Naive thymus-derived CD8-positive, alpha-beta T cell (primary cell): ENCODE measurements at regions of chr1 and their contacts with region 1.

Region 1: GRCh38 chr1:150979092-150980056 is 2.7 kb upstream of the ANXA9 start:
- DNase-seq: peak; percentile 77 to 94 (median 88)
- ATAC-seq: peak; percentile 58 to 60
- H3K4me3 Mint-ChIP-seq: peak overlapping the region; percentile 52 to 78 (median 68)
- H3K27ac Mint-ChIP-seq: peak overlapping the region; percentile 47 to 95 (median 80)
- H3K4me1 Mint-ChIP-seq: peaks cover 17 to 44% (median 39%) of the 10 kb centered on the region in 4 donors
- H3K27me3 Mint-ChIP-seq: no peaks in the 10 kb centered on the region

Region 2: DNA sequence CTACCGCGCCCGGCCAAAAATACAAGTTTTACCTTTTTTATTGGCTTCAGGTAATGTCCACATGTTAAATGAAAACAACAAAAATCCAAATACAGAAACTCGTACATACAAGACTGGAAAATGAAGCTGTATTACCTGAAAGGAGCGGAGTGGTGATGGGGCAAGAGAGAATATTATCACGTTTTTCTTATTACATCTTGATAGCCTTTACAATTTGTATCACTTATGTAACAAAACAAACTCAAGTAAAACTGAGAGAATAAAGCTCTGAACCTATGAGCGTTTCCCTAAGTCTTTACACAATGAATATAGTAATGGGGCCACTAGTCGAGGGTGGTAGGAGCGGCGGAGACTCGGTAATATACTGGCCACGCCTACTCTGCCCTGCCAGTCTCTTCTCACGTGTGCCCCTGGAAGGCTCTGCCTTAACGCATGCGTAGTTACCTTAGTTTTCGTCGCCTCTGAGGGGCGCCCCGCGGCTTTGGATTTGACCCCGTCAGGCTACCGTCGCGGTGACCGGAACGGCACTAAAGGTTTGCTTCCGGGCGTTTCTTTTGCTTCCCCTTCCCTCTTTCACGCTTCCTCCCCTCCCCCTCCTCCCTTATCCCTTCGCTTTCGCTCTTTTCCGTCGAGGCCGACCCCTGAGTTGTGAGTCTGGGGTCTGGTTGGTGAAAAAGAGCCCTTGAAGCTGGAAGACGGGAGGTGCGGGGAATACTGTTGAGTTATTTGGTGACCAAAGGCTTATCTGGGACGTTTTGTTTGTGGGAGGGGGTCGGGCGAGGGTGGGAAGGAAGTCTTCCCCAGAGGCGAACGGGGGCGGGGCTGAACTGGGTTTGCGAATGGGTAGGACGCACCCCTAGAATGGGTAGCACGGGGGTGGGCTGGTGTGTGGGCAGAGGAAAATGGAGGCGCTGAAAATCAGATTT is 53.3 kb before region 1 on chr1 and contains the start of gene SETDB1:
- POLR2A ChIA-PET with region 1: interaction called, 14 read pairs
- DNase-seq: peak; percentile 78 to 97 (median 92)
- ATAC-seq: peak; percentile 94 to 96
- H3K4me3 Mint-ChIP-seq: peak within 1 kb of the TSS; percentile 90 to 99 (median 95)
- H3K27ac Mint-ChIP-seq: peak within 1 kb of the TSS; percentile 92 to 99 (median 96)
- H3K4me1 Mint-ChIP-seq: peaks cover 10 to 41% (median 28%) of the 10 kb centered on the region in 4 donors
- H3K27me3 Mint-ChIP-seq: no peaks in the 10 kb centered on the region
- polyA plus RNA-seq, gene SETDB1: 9.9 to 17.5 (median 10.1) TPM

Region 3: DNA sequence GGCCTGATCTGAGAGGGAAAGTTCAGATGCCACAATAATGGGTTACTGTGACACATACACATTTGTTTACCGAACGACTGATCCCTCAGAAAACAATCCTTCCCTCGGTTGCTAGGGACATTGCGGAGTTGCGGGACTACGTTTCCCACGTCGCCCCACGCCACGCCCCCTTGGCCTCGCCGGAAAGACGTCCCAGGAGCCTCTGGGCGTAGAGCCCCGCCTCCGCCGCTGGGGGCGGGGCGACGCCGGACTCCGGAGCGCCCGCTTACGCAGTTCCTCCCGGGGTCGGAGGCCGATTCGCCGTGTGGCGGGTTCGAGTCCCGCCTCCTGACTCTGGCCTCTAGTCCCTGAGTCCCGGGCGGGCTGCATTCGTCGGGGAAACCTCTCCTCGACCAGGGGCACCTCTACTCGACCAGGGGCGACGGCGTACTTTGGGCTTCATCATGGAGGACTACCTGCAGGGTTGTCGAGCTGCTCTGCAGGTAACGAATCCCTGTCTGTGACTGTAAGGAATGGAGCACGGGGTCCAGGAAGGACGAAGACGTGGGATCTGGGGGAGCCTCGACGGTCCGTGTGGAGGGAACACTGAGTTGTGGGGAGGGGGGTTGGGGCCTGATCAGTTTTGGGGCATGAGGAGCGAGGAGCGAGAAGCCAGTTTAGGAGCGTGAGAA is 29.0 kb after region 1 on chr1 and contains the start of gene PRUNE1:
- POLR2A ChIA-PET with region 1: interaction called, 32 read pairs
- DNase-seq: peak; percentile 88 to 98 (median 94)
- ATAC-seq: peak; percentile 77 to 83
- H3K4me3 Mint-ChIP-seq: peak within 1 kb of the TSS; percentile 89 to 98 (median 96)
- H3K27ac Mint-ChIP-seq: peak within 1 kb of the TSS; percentile 95 to 99 (median 98)
- H3K4me1 Mint-ChIP-seq: peaks cover 37 to 91% (median 84%) of the 10 kb centered on the region in 4 donors
- H3K27me3 Mint-ChIP-seq: no peaks in the 10 kb centered on the region
- polyA plus RNA-seq, gene PRUNE1: 53.2 to 55.1 (median 54.9) TPM